ENCODE measurements at regions of chr1 and their contacts with region 1.

Region 1: DNA sequence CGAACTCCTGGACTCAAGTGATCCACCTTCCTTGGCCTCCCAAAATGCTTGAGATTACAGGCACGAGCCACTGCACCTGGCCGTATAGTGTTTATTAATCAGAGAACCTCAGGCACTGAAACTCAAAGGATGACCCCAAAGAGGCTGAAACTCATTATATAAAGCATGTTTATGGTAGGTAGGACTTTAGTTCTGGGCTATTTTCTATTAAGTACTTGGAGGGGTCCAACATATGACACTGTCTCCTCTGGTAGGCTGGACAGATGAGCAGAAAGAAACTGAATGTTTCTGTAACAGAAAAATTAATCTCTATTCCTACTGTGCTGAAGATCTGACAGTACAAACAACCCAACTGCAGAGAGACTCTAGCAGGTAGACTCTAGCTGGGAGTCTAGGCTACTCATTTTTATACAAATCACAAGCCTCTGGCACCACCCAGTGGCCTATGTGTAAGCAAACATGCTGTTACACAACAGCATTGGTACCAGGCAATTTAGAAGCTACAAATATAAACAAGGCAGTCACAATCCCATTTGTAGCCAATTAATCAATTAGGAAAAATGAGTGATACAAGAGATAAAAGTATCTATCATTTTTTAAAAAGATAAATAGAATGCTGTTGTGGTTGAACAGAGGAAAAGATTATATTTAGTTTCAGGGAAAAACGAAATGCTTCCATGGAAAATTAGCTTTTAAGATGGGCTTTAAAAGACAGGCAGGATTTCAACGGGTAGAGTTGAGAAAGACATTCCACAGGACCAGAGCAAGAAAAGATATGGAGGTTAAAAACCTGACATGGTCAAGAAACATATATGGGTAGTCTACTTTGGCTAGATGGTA is 10.4 kb downstream of the DCAF8 start:
- DNase-seq: peak; percentile 87
- H3K4me3 Mint-ChIP-seq: no peak overlapping the region
- H3K27ac Mint-ChIP-seq: peak overlapping the region; percentile 75
- H3K4me1 Mint-ChIP-seq: peaks cover 25% of the 10 kb centered on the region
- H3K27me3 Mint-ChIP-seq: no peaks in the 10 kb centered on the region
- CTCF ChIP-seq: peak; percentile 85

Region 2: GRCh38 chr1:160046494-160047110 is 205.3 kb before region 1 on chr1:
- CTCF ChIA-PET with region 1: interaction called, 16 read pairs
- POLR2A ChIA-PET with region 1: no interaction called
- intact Hi-C with region 1: no loop called
- DNase-seq: peak; percentile 73
- H3K4me3 Mint-ChIP-seq: no peak overlapping the region
- H3K27ac Mint-ChIP-seq: no peak overlapping the region
- H3K4me1 Mint-ChIP-seq: peaks cover 16% of the 10 kb centered on the region
- H3K27me3 Mint-ChIP-seq: peaks cover 63% of the 10 kb centered on the region
- CTCF ChIP-seq: peak; percentile 83

Region 3: GRCh38 chr1:160108888-160109662 is 142.8 kb before region 1 on chr1:
- CTCF ChIA-PET with region 1: interaction called, 187 read pairs
- POLR2A ChIA-PET with region 1: interaction called, 5 read pairs
- intact Hi-C with region 1: no loop called
- DNase-seq: peak; percentile 88
- H3K4me3 Mint-ChIP-seq: no peak overlapping the region
- H3K27ac Mint-ChIP-seq: no peak overlapping the region
- H3K4me1 Mint-ChIP-seq: peaks cover 12% of the 10 kb centered on the region
- H3K27me3 Mint-ChIP-seq: no peaks in the 10 kb centered on the region
- CTCF ChIP-seq: peak; percentile 52

Region 4: GRCh38 chr1:160205242-160206035 is 46.5 kb before region 1 on chr1 and contains the start of gene PEA15:
- CTCF ChIA-PET with region 1: interaction called, 14 read pairs
- POLR2A ChIA-PET with region 1: interaction called, 7 read pairs
- intact Hi-C with region 1: loop called (anchors 5 kb)
- DNase-seq: peak; percentile 75
- H3K4me3 Mint-ChIP-seq: peak within 1 kb of the TSS; percentile 82
- H3K27ac Mint-ChIP-seq: peak within 1 kb of the TSS; percentile 17
- H3K4me1 Mint-ChIP-seq: peaks cover 25% of the 10 kb centered on the region
- H3K27me3 Mint-ChIP-seq: no peaks in the 10 kb centered on the region
- CTCF ChIP-seq: no peak
- total RNA-seq, gene PEA15: 183 and 198 TPM in 2 replicates

Region 5: GRCh38 chr1:160226623-160227022 is 25.3 kb before region 1 on chr1:
- CTCF ChIA-PET with region 1: interaction called, 104 read pairs
- POLR2A ChIA-PET with region 1: interaction called, 5 read pairs
- intact Hi-C with region 1: no loop called
- DNase-seq: no peak
- H3K4me3 Mint-ChIP-seq: no peak overlapping the region
- H3K27ac Mint-ChIP-seq: no peak overlapping the region
- H3K4me1 Mint-ChIP-seq: no peaks in the 10 kb centered on the region
- H3K27me3 Mint-ChIP-seq: no peaks in the 10 kb centered on the region
- CTCF ChIP-seq: no peak

Region 6: DNA sequence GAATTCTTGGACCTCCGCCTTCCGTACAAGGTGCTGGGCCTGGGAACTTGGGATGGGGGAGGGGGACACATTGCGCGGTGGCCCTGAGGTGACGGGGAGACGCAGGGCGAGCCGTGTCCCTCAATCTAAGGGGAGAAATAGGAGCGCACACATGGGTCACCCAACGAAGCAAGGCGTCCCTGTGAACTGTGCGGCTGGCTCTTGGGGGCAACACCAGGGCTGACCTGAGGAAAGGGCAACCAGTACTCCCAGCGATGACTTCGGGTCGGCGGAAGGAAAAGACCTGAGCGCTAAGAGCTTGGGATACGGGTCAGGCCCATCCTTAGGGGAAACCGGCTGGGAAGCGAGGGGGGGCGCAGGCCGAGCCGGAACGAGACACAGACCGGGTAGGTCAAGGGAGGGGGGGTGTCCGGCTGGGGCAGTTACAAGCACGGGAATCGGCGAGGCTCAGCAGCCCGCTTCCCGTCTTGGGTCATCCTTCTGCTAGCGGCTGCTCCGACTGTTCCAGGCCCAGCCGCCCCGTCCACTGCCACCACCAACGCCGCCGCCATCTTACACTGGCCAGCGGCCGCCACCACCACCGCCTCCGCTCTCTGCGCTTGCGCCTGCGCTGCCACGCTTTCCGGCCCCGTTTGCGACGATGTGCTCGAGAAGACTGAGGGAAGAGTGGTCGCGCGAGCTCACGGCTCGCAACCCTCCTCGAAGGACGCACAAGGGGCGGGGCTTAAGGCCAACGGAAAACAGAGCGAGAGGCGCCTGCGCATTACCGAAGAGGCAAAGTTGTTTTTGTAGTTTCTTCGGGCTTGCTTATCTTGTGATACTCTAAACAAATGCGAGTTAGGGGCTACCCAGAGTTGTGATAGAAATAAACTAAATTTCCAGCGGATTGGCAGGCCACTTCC is 10.2 kb after region 1 on chr1 and contains the start of gene DCAF8:
- CTCF ChIA-PET with region 1: interaction called, 60 read pairs
- POLR2A ChIA-PET with region 1: interaction called, 60 read pairs
- intact Hi-C with region 1: no loop called
- DNase-seq: peak; percentile 99
- H3K4me3 Mint-ChIP-seq: peak within 1 kb of the TSS; percentile 97
- H3K27ac Mint-ChIP-seq: peak within 1 kb of the TSS; percentile 100
- H3K4me1 Mint-ChIP-seq: peaks cover 28% of the 10 kb centered on the region
- H3K27me3 Mint-ChIP-seq: peaks cover 8% of the 10 kb centered on the region
- CTCF ChIP-seq: no peak
- total RNA-seq, gene DCAF8: 181 and 208 TPM in 2 replicates

Measured in MCF 10A (cell line).